ENCODE measurements at regions of chr2 and their contacts with region 1.

Region 1: DNA sequence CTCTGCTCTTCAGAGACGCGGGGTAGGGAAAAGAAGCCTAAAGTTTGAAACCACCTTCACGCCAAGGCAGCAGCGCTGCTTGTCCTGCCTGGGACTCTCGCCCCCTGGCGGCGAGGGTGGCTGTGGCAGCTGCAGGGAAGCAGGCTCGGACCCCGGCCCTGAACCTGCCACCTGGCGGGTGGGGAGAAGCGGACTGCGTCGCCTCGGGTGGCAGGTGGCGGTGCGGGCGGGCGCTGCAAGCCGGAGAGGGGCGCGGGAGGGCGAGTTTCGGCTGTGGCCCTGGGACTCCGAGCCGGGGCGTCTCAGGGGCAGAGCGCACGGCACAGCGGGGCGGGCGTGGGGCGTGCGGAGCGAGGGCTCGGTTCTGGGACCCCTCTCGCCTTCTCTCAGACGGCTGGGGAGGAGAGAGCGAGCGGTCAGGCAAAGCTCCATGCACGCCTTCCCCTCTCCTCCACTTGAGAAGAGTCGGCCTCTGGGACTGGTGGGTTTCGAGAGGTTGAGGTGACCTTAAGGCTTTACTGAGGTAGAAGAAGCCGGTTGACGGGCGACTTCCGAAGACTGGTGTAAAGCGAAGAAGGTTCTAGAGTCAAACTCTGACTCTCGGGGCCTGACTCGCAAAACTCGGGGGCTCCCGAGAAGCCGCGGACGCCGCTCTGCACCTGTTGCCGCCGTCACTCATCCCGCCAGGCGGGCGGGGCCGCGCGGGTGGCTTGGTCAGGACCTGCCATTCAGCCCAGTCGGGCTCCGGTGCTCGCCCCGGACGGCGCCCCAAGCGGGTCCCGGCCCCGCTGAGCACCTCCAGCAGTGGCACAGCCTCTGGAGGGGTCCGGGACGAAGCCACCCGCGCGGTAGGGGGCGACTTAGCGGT is 1.1 kb upstream of the BOLL start:
- DNase-seq: peak; percentile 46
- H3K4me3 ChIP-seq: peak overlapping the region; percentile 48
- H3K27ac ChIP-seq: no peak overlapping the region
- H3K4me1 ChIP-seq: peaks cover 6% of the 10 kb centered on the region
- H3K27me3 ChIP-seq: peaks cover 3% of the 10 kb centered on the region
- CTCF ChIP-seq: peak; percentile 68

Region 2: GRCh38 chr2:196239622-196240587 is 1546.3 kb before region 1 on chr2:
- CTCF ChIA-PET with region 1: no interaction called
- POLR2A ChIA-PET with region 1: interaction called, 16 read pairs
- intact Hi-C with region 1: no loop called
- DNase-seq: peak; percentile 42
- H3K4me3 ChIP-seq: no peak overlapping the region
- H3K27ac ChIP-seq: no peak overlapping the region
- H3K4me1 ChIP-seq: peaks cover 14% of the 10 kb centered on the region
- H3K27me3 ChIP-seq: no peaks in the 10 kb centered on the region
- CTCF ChIP-seq: no peak; the same call in 1 of the 2 replicates